ENCODE measurements at regions of chr19 and their contacts with region 1.

Region 1: GRCh38 chr19:40433391-40434216 is 7.8 kb upstream of the SERTAD1 start:
- DNase-seq: peak; percentile 73
- H3K4me3 Mint-ChIP-seq: peak overlapping the region; percentile 85
- H3K27ac Mint-ChIP-seq: peak overlapping the region; percentile 89
- H3K4me1 Mint-ChIP-seq: peaks cover 14% of the 10 kb centered on the region
- H3K27me3 Mint-ChIP-seq: no peaks in the 10 kb centered on the region

Region 2: DNA sequence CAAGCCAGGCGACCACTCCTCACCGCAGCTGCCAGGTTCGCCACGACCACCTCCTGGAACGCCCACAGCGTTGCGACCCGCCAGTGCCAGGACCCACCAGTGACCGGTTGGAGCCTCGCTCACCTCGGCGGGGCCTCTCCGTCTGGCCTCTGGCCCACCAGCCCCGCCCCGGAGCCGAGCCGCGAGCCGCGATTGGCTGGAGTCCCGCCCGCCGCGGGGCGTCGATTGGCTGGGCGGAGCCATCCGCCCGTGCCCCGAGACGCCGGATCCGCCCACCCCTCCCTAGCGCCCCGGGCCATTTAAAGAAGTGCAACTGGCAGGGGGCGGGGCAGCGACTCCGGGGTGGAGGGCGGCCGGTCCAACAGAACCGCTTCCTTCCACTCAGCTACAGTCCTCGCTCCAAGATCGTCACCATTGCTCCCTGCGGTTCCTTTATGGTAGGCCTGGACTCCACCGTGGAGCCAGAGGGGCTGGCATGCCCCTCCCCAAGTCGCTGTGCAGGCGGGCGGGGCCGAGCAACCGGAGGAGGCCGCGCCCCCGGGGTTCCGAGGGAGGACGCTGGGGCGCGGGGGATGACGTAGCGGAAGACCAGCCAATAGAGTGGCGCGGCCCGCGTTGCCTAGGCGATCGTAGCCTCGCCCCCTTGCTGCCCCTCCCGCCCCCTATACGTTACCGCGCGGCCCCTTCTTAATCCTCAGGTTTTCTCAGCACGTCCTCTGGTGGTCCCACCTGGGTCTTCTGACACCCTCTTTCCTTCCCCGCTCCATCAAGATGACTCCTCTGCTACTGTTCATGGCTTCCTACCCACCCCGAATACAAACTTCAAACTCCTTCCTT is 10.8 kb after region 1 on chr19 and contains the start of gene SERTAD3:
- CTCF ChIA-PET with region 1: interaction called, 7 read pairs
- POLR2A ChIA-PET with region 1: interaction called, 13 read pairs
- DNase-seq: peak; percentile 98
- H3K4me3 Mint-ChIP-seq: peak within 1 kb of the TSS; percentile 99
- H3K27ac Mint-ChIP-seq: peak within 1 kb of the TSS; percentile 97
- H3K4me1 Mint-ChIP-seq: peaks cover 21% of the 10 kb centered on the region
- H3K27me3 Mint-ChIP-seq: no peaks in the 10 kb centered on the region
- total RNA-seq, gene SERTAD3: 18.0 to 20.3 TPM

Measured in activated CD4-positive, alpha-beta memory T cell treated with anti-CD3 and anti-CD28 coated beads, Interleukin-2, amount 10 ng/mL, durations not matched to agents 7 days and 5 days (primary cell).